ENCODE measurements at regions of chr7 and their contacts with region 1.

Region 1: GRCh38 chr7:100852048-100852872 is at the start of gene SLC12A9:
- DNase-seq: peak; percentile 96
- ATAC-seq: peak; percentile 98
- H3K4me3 ChIP-seq: peak within 1 kb of the TSS; percentile 90
- H3K27ac ChIP-seq: peak within 1 kb of the TSS; percentile 47
- H3K4me1 ChIP-seq: no peaks in the 10 kb centered on the region
- H3K27me3 ChIP-seq: no peaks in the 10 kb centered on the region
- CTCF ChIP-seq: peak; percentile 96
- total RNA-seq, gene SLC12A9: 39.2 TPM

Region 2: DNA sequence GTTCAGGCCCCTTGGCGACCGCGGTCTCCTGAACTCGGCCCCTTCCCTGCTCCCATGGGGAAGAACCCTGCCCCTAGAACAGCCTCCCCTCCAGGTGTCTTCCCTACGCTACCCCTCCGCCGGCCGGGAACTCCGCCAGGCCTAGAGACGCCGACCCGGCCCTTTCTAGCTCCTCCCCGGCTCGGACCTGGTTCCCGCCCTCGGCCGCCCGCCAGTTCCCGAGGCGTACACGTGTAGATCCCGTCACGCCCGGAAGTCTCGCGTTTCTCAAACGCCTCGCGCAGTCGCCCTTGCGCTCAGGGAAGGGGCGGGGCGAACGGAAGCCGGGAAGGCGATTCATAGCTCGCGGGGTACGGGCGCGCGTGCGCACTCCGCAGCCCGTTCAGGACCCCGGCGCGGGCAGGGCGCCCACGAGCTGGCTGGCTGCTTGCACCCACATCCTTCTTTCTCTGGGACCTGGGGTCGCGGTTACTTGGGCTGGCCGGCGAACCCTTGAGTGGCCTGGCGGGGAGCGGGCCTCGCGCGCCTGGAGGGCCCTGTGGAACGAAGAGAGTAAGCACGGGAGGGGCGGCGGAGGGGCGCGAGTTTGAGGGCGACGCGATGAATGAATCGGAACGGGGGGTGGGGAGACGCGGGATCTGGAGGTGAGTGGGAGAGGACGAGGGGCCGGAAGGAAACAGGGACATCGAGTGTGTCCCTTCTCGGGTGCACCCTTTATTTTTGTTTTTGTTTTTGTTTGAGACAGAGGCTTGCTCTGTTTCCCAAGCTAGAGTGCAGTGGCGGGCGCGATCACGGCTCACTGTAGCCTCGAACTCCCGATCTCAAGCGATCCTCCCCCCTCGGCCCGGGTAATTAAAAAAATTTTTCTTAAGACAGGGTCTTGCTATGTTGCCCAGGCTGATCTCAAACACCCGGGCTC is 146.2 kb before region 1 on chr7 and contains the start of gene POP7:
- intact Hi-C with region 1: loop called (anchors 10 kb)
- DNase-seq: peak; percentile 100
- ATAC-seq: peak; percentile 97
- H3K4me3 ChIP-seq: peak within 1 kb of the TSS; percentile 73
- H3K27ac ChIP-seq: peak within 1 kb of the TSS; percentile 91
- H3K4me1 ChIP-seq: peaks cover 14% of the 10 kb centered on the region
- H3K27me3 ChIP-seq: no peaks in the 10 kb centered on the region
- CTCF ChIP-seq: no peak
- total RNA-seq, gene POP7: 20.2 TPM

Region 3: GRCh38 chr7:100803398-100804233 is 48.6 kb before region 1 on chr7:
- intact Hi-C with region 1: loop called (anchors 5 kb)
- DNase-seq: peak; percentile 81
- ATAC-seq: peak; percentile 89
- H3K4me3 ChIP-seq: peak overlapping the region; percentile 16
- H3K27ac ChIP-seq: peak overlapping the region; percentile 42
- H3K4me1 ChIP-seq: peaks cover 30% of the 10 kb centered on the region
- H3K27me3 ChIP-seq: no peaks in the 10 kb centered on the region
- CTCF ChIP-seq: no peak